ENCODE measurements at regions of chr17 and their contacts with region 1.

Region 1: DNA sequence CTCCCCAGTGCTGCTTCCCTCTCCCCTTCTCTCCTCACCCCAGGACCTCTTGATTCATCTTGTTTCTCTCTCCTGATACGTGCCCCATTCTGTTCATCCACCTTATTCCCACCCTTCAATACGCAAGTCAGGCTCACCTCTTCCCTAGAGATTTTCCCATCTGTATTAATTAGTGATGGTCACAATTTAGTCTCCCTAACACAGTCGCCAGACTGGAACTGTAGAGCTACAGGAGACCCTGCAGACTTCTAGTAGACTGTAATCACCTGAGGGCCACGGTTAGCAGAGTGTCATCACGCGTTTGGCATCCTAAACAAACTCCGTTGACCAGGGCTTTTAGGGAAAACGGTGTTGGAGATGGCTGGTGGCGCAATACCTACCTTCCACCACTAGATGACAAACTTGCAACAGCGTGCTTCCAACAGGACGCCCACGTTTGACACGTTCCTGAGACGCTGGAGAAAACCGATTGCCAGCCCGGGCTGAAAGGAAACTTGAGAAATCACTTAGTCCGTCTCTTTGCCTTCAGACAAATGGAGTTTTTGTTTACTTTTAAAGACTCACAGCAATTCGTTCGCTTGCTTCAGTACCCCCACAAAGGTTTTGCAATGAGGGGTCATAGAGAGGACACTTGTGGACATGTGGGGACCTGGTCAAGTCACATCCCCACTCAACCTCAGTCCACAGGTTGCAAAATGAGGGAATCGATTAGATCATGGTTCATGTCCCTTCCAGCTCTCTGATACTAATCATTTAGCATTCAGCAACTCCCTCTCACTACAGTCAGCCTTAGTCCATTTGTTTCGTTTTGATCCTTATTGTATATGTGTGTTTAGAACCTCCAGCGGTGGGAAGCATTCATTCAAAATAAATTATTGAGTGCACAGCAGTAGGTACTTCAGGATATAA is 20.6 kb downstream of the MYL4 start:
- DNase-seq: peak; percentile 68 to 84 (median 74)
- ATAC-seq: peak; percentile 89 to 97 (median 94)
- H3K4me3 ChIP-seq: peak overlapping the region in 1 of 4 donors; percentile 33
- H3K27ac ChIP-seq: no peak overlapping the region
- H3K4me1 ChIP-seq: peaks cover 0 to 19% (median 8%) of the 10 kb centered on the region in 3 donors
- H3K27me3 ChIP-seq: no peaks in the 10 kb centered on the region
- CTCF ChIP-seq: peak; percentile 78 to 97 (median 91)

Region 2: DNA sequence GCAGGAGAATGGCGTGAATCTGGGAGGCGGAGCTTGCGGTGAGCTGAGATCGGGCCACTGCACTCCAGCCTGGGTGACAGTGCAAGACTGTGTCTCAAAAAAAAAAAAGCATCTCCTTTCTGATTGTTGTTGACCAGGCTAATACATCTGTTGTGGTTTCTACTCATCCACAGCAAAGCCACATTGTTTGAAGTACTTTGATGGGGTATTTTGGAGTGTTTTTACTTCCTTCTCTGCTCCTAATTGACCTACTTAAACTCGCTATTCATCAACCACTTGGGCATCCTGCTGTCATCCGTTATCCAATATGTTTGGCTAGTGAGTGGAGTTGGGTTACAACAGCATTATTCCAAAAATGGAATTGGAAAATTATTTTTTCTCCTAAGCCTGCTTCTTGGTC is 37.2 kb before region 1 on chr17:
- intact Hi-C with region 1: no loop called
- DNase-seq: no peak
- ATAC-seq: no peak
- H3K4me3 ChIP-seq: no peak overlapping the region
- H3K27ac ChIP-seq: no peak overlapping the region
- H3K4me1 ChIP-seq: peaks cover 3 to 7% (median 5%) of the 10 kb centered on the region in 3 donors
- H3K27me3 ChIP-seq: no peaks in the 10 kb centered on the region
- CTCF ChIP-seq: no peak

Region 3: DNA sequence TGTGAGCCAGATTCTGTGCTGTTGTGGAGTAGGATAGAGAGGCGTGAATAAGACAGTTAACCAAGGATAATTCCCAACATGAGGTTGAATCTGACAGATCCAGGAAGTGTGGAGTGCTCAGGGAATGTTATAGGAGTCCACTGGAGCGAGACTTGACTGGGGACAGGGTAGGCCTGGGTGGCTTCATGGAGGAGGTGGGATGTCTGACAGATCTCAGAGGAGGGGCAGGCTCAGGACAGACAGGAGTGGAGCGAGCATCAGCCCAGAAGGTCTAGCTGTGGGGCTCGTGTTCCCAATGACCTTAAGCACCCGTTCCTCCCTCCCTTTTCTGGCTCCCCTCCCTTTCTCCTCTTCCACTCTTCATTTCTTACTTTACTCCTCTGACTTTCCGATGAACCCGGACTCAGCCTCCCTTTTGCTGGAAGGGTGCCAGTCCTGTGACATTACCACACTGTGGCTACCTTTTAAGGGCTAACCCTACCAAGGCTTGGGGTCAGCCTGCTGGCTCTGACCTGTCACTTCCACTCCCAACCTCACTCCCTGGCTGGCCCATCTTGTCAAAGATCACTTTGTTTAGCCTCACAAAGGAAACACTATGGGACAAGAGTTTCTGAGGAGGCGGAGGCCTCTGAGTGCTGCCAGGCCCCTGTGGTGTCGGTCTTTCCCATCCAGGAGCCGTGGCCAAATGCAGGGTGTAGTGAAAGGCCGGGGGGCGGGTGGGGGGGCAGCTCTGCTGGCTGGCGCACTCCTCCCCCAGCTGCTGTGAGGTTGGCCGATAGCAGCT is 65.5 kb after region 1 on chr17:
- intact Hi-C with region 1: loop called in 1 of 3 experiments (anchors 10 kb)
- DNase-seq: no peak
- ATAC-seq: no peak
- H3K4me3 ChIP-seq: no peak overlapping the region
- H3K27ac ChIP-seq: no peak overlapping the region
- H3K4me1 ChIP-seq: no peaks in the 10 kb centered on the region
- H3K27me3 ChIP-seq: no peaks in the 10 kb centered on the region
- CTCF ChIP-seq: no peak

Region 4: GRCh38 chr17:47310186-47310970 is 80.6 kb after region 1 on chr17:
- intact Hi-C with region 1: loop called in 1 of 3 experiments (anchors 5 kb)
- DNase-seq: no peak
- ATAC-seq: no peak
- H3K4me3 ChIP-seq: no peak overlapping the region
- H3K27ac ChIP-seq: no peak overlapping the region
- H3K4me1 ChIP-seq: no peaks in the 10 kb centered on the region
- H3K27me3 ChIP-seq: no peaks in the 10 kb centered on the region
- CTCF ChIP-seq: no peak

Region 5: DNA sequence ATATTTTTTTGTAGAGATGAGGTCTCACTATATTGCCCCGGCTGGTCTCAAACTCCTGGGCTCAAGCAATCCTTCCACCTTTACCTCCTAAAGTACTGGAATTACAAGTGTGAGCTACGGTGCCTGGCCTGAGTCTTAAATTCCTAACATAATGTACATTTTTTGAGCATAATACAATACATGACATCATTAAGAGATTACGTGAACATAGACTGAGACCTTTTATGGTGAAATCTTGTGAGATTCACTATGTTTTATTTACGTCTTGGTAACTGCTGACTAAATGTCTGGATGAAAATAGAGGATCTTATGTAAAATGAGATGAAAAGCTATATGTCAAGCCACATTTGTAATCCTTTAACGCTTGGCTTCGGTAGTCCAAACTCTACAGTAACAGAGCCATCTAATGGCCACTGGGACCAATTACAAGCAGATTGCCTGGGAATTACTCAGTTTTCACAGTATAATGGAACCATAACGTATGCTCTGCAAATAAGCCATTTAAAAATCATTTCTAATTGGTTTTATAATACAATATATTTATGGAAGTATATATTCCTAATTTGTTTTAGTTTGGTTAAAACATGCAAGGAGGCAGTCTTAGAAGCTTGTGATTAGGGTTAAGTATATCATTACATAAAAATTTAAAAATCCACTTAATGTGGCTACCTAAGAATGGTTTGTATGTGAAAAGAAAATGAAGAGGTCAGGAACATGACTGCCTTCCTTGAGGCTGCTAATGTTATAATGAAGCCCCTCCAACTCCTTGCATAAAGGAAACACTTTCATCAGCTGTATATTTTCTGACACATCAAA is 85.9 kb after region 1 on chr17:
- intact Hi-C with region 1: loop called in 2 of 3 experiments (anchors 2 to 5 kb)
- DNase-seq: peak in 2 of 6 donors; percentile 13 to 44
- ATAC-seq: peak; percentile 72 to 98 (median 94)
- H3K4me3 ChIP-seq: no peak overlapping the region
- H3K27ac ChIP-seq: no peak overlapping the region
- H3K4me1 ChIP-seq: no peaks in the 10 kb centered on the region
- H3K27me3 ChIP-seq: no peaks in the 10 kb centered on the region
- CTCF ChIP-seq: peak in 3 of 4 donors; percentile 34 to 65 (median 57)